ENCODE measurements at regions of chr19 and their contacts with region 1.

Region 1: GRCh38 chr19:4267101-4267900 is 11.8 kb upstream of the SHD start:
- DNase-seq: peak in 1 of 2 donors; percentile 7
- ATAC-seq: peak in 1 of 2 donors; percentile 44
- H3K4me3 ChIP-seq: no peak overlapping the region
- H3K27ac ChIP-seq: no peak overlapping the region
- H3K4me1 ChIP-seq: no peaks in the 10 kb centered on the region
- H3K27me3 ChIP-seq: no peaks in the 10 kb centered on the region
- CTCF ChIP-seq: peak; percentile 76 to 90 (median 78)
- POLR2A ChIP-seq: no peak

Region 2: GRCh38 chr19:4352701-4353121 is 85.4 kb after region 1 on chr19:
- in situ Hi-C with region 1: loop called in 1 of 4 experiments (anchors 10 kb)
- intact Hi-C with region 1: loop called (anchors 1 kb)
- DNase-seq: no peak
- ATAC-seq: peak; percentile 25 to 77
- H3K4me3 ChIP-seq: no peak overlapping the region
- H3K27ac ChIP-seq: no peak overlapping the region
- H3K4me1 ChIP-seq: no peaks in the 10 kb centered on the region
- H3K27me3 ChIP-seq: no peaks in the 10 kb centered on the region
- CTCF ChIP-seq: peak; percentile 56 to 86 (median 67)
- POLR2A ChIP-seq: no peak

Region 3: DNA sequence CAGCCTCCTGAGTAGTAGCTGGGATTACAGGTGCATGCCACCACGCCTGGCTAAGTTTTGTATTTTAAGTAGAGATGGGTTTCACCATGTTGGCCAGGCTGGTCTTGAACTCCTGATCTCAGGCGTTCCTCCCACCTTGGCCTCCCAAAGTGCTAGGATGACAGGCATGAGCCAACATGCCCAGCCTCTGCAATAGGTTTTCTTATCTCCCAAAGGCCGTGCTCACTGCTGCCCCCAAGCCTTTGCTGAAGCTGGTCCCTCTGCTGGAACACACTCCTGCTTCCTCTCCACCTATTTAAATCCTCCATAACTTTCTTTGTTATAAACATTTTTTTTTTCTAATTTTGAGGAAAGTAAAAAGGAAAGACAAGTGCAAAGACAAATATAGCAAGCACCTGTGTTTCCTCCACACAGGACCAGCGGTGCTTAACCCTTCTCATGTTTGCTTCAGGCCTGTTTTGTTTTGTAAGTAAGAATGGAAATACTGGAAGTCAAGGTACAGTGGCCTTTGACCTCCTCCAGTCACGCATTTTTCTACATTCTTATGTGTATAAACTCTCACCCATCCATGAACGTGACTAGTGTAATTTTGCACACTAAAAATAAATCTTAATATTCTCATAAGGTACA is 357.5 kb after region 1 on chr19:
- in situ Hi-C with region 1: loop called in 2 of 4 experiments (anchors 25 kb)
- intact Hi-C with region 1: no loop called
- DNase-seq: no peak
- ATAC-seq: no peak
- H3K4me3 ChIP-seq: no peak overlapping the region
- H3K27ac ChIP-seq: no peak overlapping the region
- H3K4me1 ChIP-seq: no peaks in the 10 kb centered on the region
- H3K27me3 ChIP-seq: peaks cover 2 to 8% (median 7%) of the 10 kb centered on the region in 3 donors
- CTCF ChIP-seq: no peak
- POLR2A ChIP-seq: no peak

Region 4: GRCh38 chr19:4638828-4639530 is 371.7 kb after region 1 on chr19 and contains the start of gene TNFAIP8L1:
- in situ Hi-C with region 1: loop called in 1 of 4 experiments (anchors 25 kb)
- intact Hi-C with region 1: no loop called
- DNase-seq: peak; percentile 93 to 94
- ATAC-seq: peak; percentile 92 to 95
- H3K4me3 ChIP-seq: peak within 1 kb of the TSS; percentile 62 to 82 (median 77)
- H3K27ac ChIP-seq: peak within 1 kb of the TSS; percentile 79 to 83 (median 80)
- H3K4me1 ChIP-seq: peaks cover 26 to 28% of the 10 kb centered on the region in 2 donors
- H3K27me3 ChIP-seq: no peaks in the 10 kb centered on the region
- CTCF ChIP-seq: no peak
- POLR2A ChIP-seq: no peak
- total RNA-seq, gene TNFAIP8L1: 1.3 to 2.9 (median 1.7) TPM

Measured in gastrocnemius medialis (tissue), 4 donors.